Mammary epithelial cell (primary cell): ENCODE measurements at regions of chr10 and their contacts with region 1.

Region 1: DNA sequence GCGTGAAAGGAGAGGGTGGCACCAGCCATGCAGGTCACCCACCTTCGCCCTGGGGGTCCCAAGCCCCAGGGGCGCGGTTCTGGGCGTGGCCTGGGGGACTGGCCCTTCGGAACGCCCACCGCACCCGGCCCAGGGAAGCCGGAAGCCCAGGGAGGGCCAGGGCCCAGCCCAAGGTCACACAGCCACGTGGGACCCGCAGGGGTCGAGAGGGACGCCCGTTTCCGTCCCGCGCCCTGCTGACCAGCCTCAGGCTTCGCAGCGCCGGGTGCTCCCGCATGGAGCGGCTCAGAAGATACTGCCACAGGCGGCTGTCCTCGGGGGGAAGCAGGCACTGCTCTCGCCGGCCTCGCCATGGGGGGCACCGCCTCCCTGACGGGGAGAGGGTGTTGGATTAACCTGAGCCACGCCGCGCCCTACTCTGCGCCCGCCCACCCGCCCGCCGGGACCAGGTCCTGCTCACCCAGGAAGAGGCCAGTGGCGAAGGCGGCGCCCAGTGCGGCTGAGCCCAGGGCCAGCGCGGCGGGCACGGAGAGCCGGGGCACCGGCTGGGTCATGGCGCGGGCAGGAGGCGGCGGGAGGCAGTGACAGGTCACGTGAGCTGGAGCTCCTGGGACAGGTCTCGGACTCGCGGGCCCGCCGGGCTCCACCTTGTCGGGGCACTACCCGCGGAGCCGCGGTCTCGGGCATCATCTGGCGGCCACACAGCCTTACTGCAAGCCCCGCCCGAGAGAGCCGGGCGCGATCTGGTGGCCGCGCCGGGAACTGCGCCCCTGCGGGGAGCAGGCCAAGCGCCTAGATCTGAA is at the start of gene COMTD1:
- DNase-seq: peak; percentile 89
- H3K4me3 ChIP-seq: peak within 1 kb of the TSS; percentile 67 to 81 (median 81)
- H3K27ac ChIP-seq: peak within 1 kb of the TSS; percentile 60
- H3K4me1 ChIP-seq: peaks cover 26% of the 10 kb centered on the region
- H3K27me3 ChIP-seq: no peaks in the 10 kb centered on the region
- CTCF ChIP-seq: peak; percentile 100
- total RNA-seq, gene COMTD1: 20.0 to 26.3 TPM

Region 2: GRCh38 chr10:74419958-74420375 is 815.6 kb before region 1 on chr10:
- CTCF ChIA-PET with region 1: no interaction called
- dilution Hi-C with region 1: no loop called
- in situ Hi-C with region 1: no loop called
- intact Hi-C with region 1: loop called (anchors 5 kb)
- DNase-seq: peak; percentile 9
- H3K4me3 ChIP-seq: no peak overlapping the region
- H3K27ac ChIP-seq: no peak overlapping the region
- H3K4me1 ChIP-seq: peaks cover 5% of the 10 kb centered on the region
- H3K27me3 ChIP-seq: no peaks in the 10 kb centered on the region
- CTCF ChIP-seq: peak; percentile 39 to 46

Region 3: DNA sequence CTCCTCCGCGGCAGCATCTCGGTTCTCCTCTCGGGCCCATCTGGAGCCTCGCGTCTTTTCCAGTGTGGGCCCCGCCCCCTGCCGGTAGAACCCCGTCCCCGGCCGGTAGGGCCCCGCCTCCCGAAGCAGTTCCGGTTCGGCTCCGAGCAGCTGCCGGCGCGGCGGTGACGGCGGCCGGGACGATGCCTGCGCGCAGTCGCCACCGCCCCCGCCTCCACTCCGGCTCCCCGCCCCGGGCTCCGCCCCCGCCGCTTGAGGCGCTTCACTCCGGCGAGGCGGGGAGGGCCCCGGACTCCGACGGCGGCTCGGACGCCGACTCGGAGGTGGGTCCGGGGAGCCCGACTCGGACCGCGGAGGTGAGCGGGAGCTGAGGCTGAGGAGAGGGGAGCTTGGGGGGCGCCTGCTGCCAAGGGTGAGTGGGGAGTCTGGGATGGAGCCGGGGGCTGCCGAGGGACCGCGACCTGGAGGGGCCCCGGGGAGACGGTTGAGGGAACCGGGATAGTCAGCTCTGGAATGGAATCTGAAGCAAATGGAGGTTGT is 124.1 kb before region 1 on chr10 and contains the start of gene SAMD8:
- CTCF ChIA-PET with region 1: no interaction called
- dilution Hi-C with region 1: no loop called
- in situ Hi-C with region 1: loop called in 1 of 2 experiments (anchors 10 kb)
- intact Hi-C with region 1: loop called (anchors 2 kb)
- DNase-seq: peak; percentile 93
- H3K4me3 ChIP-seq: peak within 1 kb of the TSS; percentile 91 to 98 (median 95)
- H3K27ac ChIP-seq: peak within 1 kb of the TSS; percentile 77
- H3K4me1 ChIP-seq: peaks cover 20% of the 10 kb centered on the region
- H3K27me3 ChIP-seq: no peaks in the 10 kb centered on the region
- CTCF ChIP-seq: peak in 1 of 2 donors; percentile 14
- total RNA-seq, gene SAMD8: 30.1 to 39.5 TPM

Region 4: GRCh38 chr10:75187961-75188426 is 47.6 kb before region 1 on chr10:
- CTCF ChIA-PET with region 1: interaction called, 10 read pairs
- dilution Hi-C with region 1: no loop called
- in situ Hi-C with region 1: loop called in 1 of 2 experiments (anchors 5 kb)
- intact Hi-C with region 1: loop called (anchors 1 kb)
- DNase-seq: peak; percentile 75
- H3K4me3 ChIP-seq: no peak overlapping the region
- H3K27ac ChIP-seq: no peak overlapping the region
- H3K4me1 ChIP-seq: peaks cover 13% of the 10 kb centered on the region
- H3K27me3 ChIP-seq: no peaks in the 10 kb centered on the region
- CTCF ChIP-seq: peak; percentile 83 to 92